ENCODE measurements at regions of chr1 and their contacts with region 1.

Region 1: GRCh38 chr1:209565759-209566678 is 17.5 kb upstream of the CAMK1G start:
- DNase-seq: no peak
- ATAC-seq: peak; percentile 96
- H3K4me3 ChIP-seq: no peak overlapping the region
- H3K27ac ChIP-seq: no peak overlapping the region
- H3K4me1 ChIP-seq: no peaks in the 10 kb centered on the region
- H3K27me3 ChIP-seq: peaks cover 0 to 5% of the 10 kb centered on the region in 2 experiments; a peak in 3 of 4 replicates
- CTCF ChIP-seq: peak; percentile 76 to 87 (median 82)
- EP300 ChIP-seq: no peak
- POLR2A ChIP-seq: no peak
- RAD21 ChIP-seq: peak; percentile 68

Region 2: GRCh38 chr1:209549443-209550205 is 16.4 kb before region 1 on chr1:
- CTCF ChIA-PET with region 1: interaction called, 24 read pairs
- POLR2A ChIA-PET with region 1: no interaction called
- RAD21 ChIA-PET with region 1: interaction called, 3 read pairs
- SMC1A ChIA-PET with region 1: no interaction called
- in situ Hi-C with region 1: no loop called
- intact Hi-C with region 1: no loop called
- DNase-seq: no peak
- ATAC-seq: 0 out of 3 replicates have a peak, but pooled peaks have one; percentile 28
- H3K4me3 ChIP-seq: no peak overlapping the region
- H3K27ac ChIP-seq: no peak overlapping the region
- H3K4me1 ChIP-seq: no peaks in the 10 kb centered on the region
- H3K27me3 ChIP-seq: peaks cover 0 to 3% of the 10 kb centered on the region in 2 experiments; a peak in 2 of 4 replicates
- CTCF ChIP-seq: 0 out of 6 replicates have a peak, but pooled peaks of 1 of the 3 experiments have one; percentile 11
- EP300 ChIP-seq: no peak
- POLR2A ChIP-seq: no peak
- RAD21 ChIP-seq: no peak

Region 3: GRCh38 chr1:209601809-209602657 is 36.0 kb after region 1 on chr1:
- CTCF ChIA-PET with region 1: interaction called, 25 read pairs
- POLR2A ChIA-PET with region 1: no interaction called
- RAD21 ChIA-PET with region 1: interaction called, 4 read pairs
- SMC1A ChIA-PET with region 1: interaction called, 9 read pairs
- in situ Hi-C with region 1: no loop called
- intact Hi-C with region 1: no loop called
- DNase-seq: no peak
- ATAC-seq: peak; percentile 95
- H3K4me3 ChIP-seq: no peak overlapping the region
- H3K27ac ChIP-seq: no peak overlapping the region
- H3K4me1 ChIP-seq: peaks cover under 1% of the 10 kb centered on the region; the same call in 1 of the 2 replicates
- H3K27me3 ChIP-seq: no peaks in the 10 kb centered on the region
- CTCF ChIP-seq: peak; percentile 64 to 82 (median 70); a peak in 5 of 6 replicates
- EP300 ChIP-seq: no peak
- POLR2A ChIP-seq: no peak
- RAD21 ChIP-seq: peak; percentile 67

Region 4: GRCh38 chr1:209627732-209628196 is 61.7 kb after region 1 on chr1:
- CTCF ChIA-PET with region 1: interaction called, 53 read pairs
- POLR2A ChIA-PET with region 1: interaction called, 3 read pairs
- RAD21 ChIA-PET with region 1: interaction called, 11 read pairs
- SMC1A ChIA-PET with region 1: interaction called, 9 read pairs
- in situ Hi-C with region 1: loop called (anchors 10 kb)
- intact Hi-C with region 1: loop called (anchors 1 kb)
- DNase-seq: no peak
- ATAC-seq: peak; percentile 95
- H3K4me3 ChIP-seq: no peak overlapping the region
- H3K27ac ChIP-seq: no peak overlapping the region
- H3K4me1 ChIP-seq: no peaks in the 10 kb centered on the region
- H3K27me3 ChIP-seq: no peaks in the 10 kb centered on the region
- CTCF ChIP-seq: peak; percentile 98 to 99 (median 98); a peak in 5 of 6 replicates
- EP300 ChIP-seq: no peak
- POLR2A ChIP-seq: no peak
- RAD21 ChIP-seq: peak; percentile 96

Region 5: DNA sequence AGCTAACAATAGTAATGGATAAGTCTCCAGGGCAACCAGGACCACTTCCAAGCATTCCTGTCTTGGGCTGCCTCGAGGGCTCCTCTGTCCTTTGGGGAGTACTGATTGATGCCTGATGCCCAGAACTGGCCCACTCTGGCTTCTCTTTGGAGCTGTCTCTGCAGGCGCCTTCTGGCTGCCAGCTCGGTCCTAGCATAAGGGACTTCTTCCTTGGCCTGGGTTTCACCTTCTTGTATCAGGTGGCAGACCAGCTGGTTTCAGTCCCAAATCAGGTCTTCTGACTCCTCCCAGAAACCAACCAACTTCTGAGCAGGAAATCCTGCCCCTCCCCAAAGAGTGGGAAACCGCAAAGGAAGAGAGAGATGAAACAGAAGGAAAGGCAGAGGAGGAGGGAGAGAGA is 119.8 kb after region 1 on chr1:
- CTCF ChIA-PET with region 1: interaction called, 307 read pairs
- POLR2A ChIA-PET with region 1: no interaction called
- RAD21 ChIA-PET with region 1: interaction called, 3 read pairs
- SMC1A ChIA-PET with region 1: interaction called, 46 read pairs
- in situ Hi-C with region 1: no loop called
- intact Hi-C with region 1: no loop called
- DNase-seq: no peak
- ATAC-seq: peak; percentile 88
- H3K4me3 ChIP-seq: no peak overlapping the region
- H3K27ac ChIP-seq: no peak overlapping the region
- H3K4me1 ChIP-seq: no peaks in the 10 kb centered on the region
- H3K27me3 ChIP-seq: no peaks in the 10 kb centered on the region
- CTCF ChIP-seq: no peak
- EP300 ChIP-seq: no peak
- POLR2A ChIP-seq: no peak
- RAD21 ChIP-seq: no peak